ENCODE measurements at regions of chr7 and their contacts with region 1.

Region 1: GRCh38 chr7:144137501-144137900 is 14.5 kb downstream of the OR2A14 start:
- DNase-seq: no peak
- ATAC-seq: no peak
- H3K4me3 ChIP-seq: no peak overlapping the region
- H3K27ac ChIP-seq: no peak overlapping the region
- H3K4me1 ChIP-seq: no peaks in the 10 kb centered on the region
- H3K27me3 ChIP-seq: no peaks in the 10 kb centered on the region
- CTCF ChIP-seq: no peak
- POLR2A ChIP-seq: no peak

Region 2: DNA sequence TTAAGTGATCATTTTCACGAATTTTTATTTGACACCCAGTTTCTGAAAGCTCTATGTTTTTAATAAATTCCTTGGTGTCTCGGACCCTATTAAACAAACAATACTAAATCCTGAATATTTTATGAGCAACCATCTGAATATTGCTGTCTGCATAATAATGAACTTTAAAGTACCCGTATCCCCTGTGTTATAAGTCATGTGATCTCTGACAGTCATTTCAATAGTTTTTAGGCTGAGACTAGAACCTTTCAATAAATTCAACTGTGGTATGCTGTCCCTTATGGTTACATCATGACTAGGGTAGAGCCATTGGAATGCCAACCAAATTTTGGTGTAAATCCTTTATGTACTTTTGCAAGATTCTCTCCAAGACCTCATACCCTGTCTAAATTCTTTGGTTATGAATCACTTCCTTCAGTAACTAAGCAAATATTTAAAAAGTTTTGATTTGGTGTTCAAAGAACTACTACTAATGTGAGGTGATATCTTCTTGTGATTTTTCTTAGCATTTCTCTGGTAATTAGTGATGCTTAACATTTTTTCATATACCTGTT is 158.2 kb before region 1 on chr7:
- intact Hi-C with region 1: loop called in 1 of 10 experiments (anchors 10 kb)
- DNase-seq: no peak
- ATAC-seq: no peak
- H3K4me3 ChIP-seq: no peak overlapping the region
- H3K27ac ChIP-seq: no peak overlapping the region
- H3K4me1 ChIP-seq: no peaks in the 10 kb centered on the region
- H3K27me3 ChIP-seq: no peaks in the 10 kb centered on the region
- CTCF ChIP-seq: no peak
- POLR2A ChIP-seq: no peak

Measured in heart left ventricle (tissue), 16 donors.